ENCODE measurements at regions of chr7 and their contacts with region 1.

Region 1: GRCh38 chr7:101217388-101218235 is at the starts of genes PLOD3 and ZNHIT1:
- DNase-seq: peak; percentile 96
- ATAC-seq: peak; percentile 92
- H3K4me3 ChIP-seq: peak within 1 kb of the TSS; percentile 88
- H3K27ac ChIP-seq: peak within 1 kb of the TSS; percentile 88
- H3K4me1 ChIP-seq: peaks cover 5% of the 10 kb centered on the region
- H3K27me3 ChIP-seq: no peaks in the 10 kb centered on the region
- CTCF ChIP-seq: peak in 1 of 3 experiments; percentile 5; a peak in 1 of 6 replicates
- EP300 ChIP-seq: no peak
- POLR2A ChIP-seq: peak; percentile 59
- RAD21 ChIP-seq: no peak
- polyA plus RNA-seq, gene PLOD3: 0.53 to 3.2 TPM
- polyA plus RNA-seq, gene ZNHIT1: 3.8 to 14.9 TPM

Region 2: DNA sequence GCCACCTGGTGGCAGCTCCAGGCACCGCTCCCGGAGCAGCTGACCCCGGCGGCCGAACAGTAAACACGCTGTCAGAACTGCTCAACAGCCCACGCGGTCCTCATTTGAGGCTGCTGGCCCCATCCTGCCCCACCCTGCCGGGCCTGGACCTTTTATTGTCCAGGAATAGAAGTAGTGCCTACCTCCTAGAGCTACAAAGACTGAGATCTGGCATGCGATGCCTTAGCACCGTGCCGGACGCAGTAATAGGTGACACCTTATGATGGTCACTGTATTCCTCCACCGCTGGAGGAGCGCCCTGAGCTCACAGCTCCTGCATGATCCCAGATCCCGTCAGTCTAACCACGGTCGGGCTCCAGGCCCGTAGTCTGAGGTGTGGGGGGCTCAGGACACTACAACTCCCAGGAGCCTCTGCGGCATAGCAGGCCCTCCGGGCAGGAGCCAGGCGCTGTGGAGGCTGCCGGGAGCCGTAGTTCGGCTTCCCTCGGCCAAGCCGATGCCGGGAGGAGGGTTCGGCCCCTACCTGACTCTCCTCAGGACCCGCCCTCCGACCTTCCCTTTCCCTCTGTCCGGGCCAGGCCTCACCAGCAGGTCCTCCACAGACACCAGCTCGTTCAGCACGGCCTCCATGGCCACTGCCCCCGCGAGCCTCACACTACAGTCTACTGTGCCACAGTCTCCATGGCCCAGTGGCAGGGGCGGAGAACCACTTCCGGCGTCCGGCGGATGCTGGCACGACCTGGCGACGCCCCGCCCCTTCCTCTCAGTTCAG is 26.9 kb after region 1 on chr7 and contains the start of gene FIS1:
- CTCF ChIA-PET with region 1: interaction called, 63 read pairs
- POLR2A ChIA-PET with region 1: interaction called, 10 read pairs
- RAD21 ChIA-PET with region 1: interaction called, 37 read pairs
- SMC1A ChIA-PET with region 1: interaction called, 19 read pairs
- in situ Hi-C with region 1: no loop called
- intact Hi-C with region 1: loop called (anchors 1 kb)
- DNase-seq: peak; percentile 68
- ATAC-seq: peak; percentile 98
- H3K4me3 ChIP-seq: peak within 1 kb of the TSS; percentile 84
- H3K27ac ChIP-seq: peak within 1 kb of the TSS; percentile 89
- H3K4me1 ChIP-seq: peaks cover 6% of the 10 kb centered on the region
- H3K27me3 ChIP-seq: no peaks in the 10 kb centered on the region
- CTCF ChIP-seq: peak; percentile 79 to 95 (median 89); a peak in 5 of 6 replicates
- EP300 ChIP-seq: 0 out of 4 replicates have a peak, but pooled peaks of 1 of the 2 experiments have one; percentile 14
- POLR2A ChIP-seq: peak; percentile 94
- RAD21 ChIP-seq: peak; percentile 39; the same call in 1 of the 2 replicates
- polyA plus RNA-seq, gene FIS1: 83.4 to 88.5 TPM

Region 3: GRCh38 chr7:101251871-101252659 is 34.5 kb after region 1 on chr7:
- CTCF ChIA-PET with region 1: interaction called, 16 read pairs
- POLR2A ChIA-PET with region 1: interaction called, 12 read pairs
- RAD21 ChIA-PET with region 1: interaction called, 5 read pairs
- SMC1A ChIA-PET with region 1: interaction called, 3 read pairs
- in situ Hi-C with region 1: no loop called
- intact Hi-C with region 1: no loop called
- DNase-seq: peak; percentile 93
- ATAC-seq: peak; percentile 100
- H3K4me3 ChIP-seq: peak overlapping the region; percentile 78
- H3K27ac ChIP-seq: peak overlapping the region; percentile 89
- H3K4me1 ChIP-seq: peaks cover 7% of the 10 kb centered on the region
- H3K27me3 ChIP-seq: no peaks in the 10 kb centered on the region; a peak in 1 of 4 replicates
- CTCF ChIP-seq: no peak
- EP300 ChIP-seq: no peak
- POLR2A ChIP-seq: peak; percentile 86
- RAD21 ChIP-seq: no peak

Region 4: DNA sequence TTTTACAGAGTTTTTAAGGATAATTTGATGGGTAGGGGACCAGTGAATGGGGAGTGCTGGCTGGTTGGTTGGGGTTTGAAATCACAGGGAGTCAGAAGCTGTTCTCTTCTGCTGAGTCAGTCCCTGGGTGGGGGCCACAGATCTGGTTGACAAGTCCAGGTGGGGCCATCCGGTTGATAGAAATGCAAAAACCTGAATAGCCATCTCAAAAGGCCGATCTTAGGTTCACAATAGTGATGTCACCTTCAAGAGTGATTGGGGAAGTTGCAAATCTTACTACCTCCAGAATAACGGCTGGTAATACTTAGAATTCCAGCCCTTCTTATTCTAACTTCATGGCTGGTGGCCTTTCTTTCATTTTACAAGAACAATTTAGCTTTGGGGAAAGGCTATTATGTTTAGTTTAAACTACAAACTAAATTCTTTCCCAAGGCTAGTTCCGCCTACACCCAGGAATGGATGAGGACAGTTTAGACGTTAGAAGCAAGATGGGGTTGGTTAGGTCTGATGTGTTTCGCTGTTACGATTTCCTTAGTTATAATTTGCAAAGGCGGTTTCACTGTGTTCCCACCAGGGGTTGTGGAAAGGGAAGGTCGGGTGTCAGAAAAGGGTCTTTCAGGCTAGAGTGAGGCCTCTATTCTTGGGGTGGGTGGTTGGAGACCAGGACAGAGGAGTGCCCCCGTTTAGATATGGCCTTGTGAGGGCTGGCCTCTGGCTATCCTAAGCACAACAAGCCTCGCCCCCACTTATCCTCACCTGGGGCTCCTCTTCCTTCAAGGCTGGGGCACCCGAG is 76.6 kb after region 1 on chr7:
- CTCF ChIA-PET with region 1: interaction called, 19 read pairs
- POLR2A ChIA-PET with region 1: no interaction called
- RAD21 ChIA-PET with region 1: interaction called, 3 read pairs
- SMC1A ChIA-PET with region 1: interaction called, 4 read pairs
- in situ Hi-C with region 1: no loop called
- intact Hi-C with region 1: no loop called
- DNase-seq: no peak
- ATAC-seq: no peak
- H3K4me3 ChIP-seq: no peak overlapping the region
- H3K27ac ChIP-seq: no peak overlapping the region
- H3K4me1 ChIP-seq: no peaks in the 10 kb centered on the region
- H3K27me3 ChIP-seq: peaks cover 0 to 4% of the 10 kb centered on the region in 2 experiments; a peak in 3 of 4 replicates
- CTCF ChIP-seq: no peak
- EP300 ChIP-seq: no peak
- POLR2A ChIP-seq: no peak
- RAD21 ChIP-seq: no peak

Measured in GM12878 (cell line).